CD4-positive, alpha-beta memory T cell (primary cell): ENCODE measurements at regions of chr9 and their contacts with region 1.

Region 1: DNA sequence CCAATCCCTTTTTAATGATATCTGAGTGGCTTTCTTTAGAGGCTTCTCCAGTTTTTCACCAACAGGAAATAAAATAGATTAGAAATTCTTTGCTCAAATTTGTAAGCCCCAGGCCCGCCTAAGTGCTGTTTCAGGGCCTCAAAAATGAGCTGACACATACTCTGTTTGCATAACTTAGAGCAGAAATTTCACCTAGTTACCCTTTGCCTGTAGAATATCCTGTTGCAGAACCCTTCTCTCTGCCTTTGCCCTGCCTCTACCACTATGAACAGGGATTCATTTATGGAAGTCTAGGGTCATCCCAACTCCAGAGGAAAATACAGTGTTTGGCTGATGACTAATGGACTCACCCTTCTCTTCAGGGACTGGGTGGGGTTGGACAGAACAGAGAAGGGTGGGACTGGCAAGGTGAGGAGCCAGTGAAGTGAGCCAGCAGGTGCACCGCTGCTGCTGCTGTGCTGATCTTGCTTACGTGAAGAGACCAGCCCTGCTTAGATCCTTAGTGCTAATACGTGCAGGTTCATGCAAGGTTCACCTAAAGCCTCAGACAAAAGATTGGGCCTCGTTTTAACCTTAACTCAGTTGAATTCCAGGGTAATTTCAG is 22.8 kb downstream of the OSTF1 start:
- DNase-seq: no peak
- H3K4me3 ChIP-seq: no peak overlapping the region
- H3K4me3 Mint-ChIP-seq: peak overlapping the region in 6 of 8 donors; percentile 6 to 66 (median 35)
- H3K27ac ChIP-seq: no peak overlapping the region
- H3K27ac Mint-ChIP-seq: peak overlapping the region; percentile 54 to 90 (median 75)
- H3K4me1 ChIP-seq: peaks cover 67% of the 10 kb centered on the region
- H3K4me1 Mint-ChIP-seq: peaks cover 46 to 73% (median 56%) of the 10 kb centered on the region in 4 donors
- H3K27me3 ChIP-seq: no peaks in the 10 kb centered on the region
- H3K27me3 Mint-ChIP-seq: no peaks in the 10 kb centered on the region

Region 2: DNA sequence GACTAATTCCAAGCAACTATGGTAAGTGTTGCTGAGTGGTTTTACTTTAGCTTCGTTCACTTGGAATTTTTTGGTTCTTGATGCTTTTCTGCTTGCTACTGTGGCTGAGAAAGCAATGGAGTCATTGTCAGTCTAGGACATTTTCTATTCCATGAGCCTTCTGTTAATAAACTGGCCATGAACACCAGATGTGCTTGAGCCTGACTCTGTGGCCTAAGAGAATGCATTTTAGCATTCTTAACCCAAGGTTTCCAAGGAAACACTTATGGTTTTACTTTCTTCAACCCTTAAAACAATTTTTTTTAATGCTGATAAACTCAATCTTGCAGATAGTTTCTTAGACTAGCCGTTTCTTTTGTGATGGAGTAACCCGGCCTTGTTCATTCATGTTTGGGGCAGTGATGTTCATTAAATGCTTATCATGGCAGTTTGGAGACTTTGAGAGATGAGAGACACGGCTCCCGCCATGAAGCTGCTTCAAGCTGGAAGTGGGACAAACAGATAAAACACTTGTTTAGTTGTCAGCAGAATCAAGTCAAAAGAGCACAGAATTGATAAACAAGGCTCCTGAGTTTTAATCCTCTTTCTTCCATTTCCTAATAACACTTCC is 19.6 kb after region 1 on chr9:
- CTCF ChIA-PET with region 1: interaction called, 3 read pairs
- POLR2A ChIA-PET with region 1: interaction called, 4 read pairs
- intact Hi-C with region 1: loop called (anchors 2 kb)
- DNase-seq: no peak
- H3K4me3 ChIP-seq: no peak overlapping the region
- H3K4me3 Mint-ChIP-seq: no peak overlapping the region
- H3K27ac ChIP-seq: no peak overlapping the region
- H3K27ac Mint-ChIP-seq: peak overlapping the region in 5 of 7 donors; percentile 22 to 49 (median 30)
- H3K4me1 ChIP-seq: peaks cover 25% of the 10 kb centered on the region
- H3K4me1 Mint-ChIP-seq: peaks cover 28 to 70% (median 47%) of the 10 kb centered on the region in 4 donors
- H3K27me3 ChIP-seq: no peaks in the 10 kb centered on the region
- H3K27me3 Mint-ChIP-seq: no peaks in the 10 kb centered on the region

Region 3: DNA sequence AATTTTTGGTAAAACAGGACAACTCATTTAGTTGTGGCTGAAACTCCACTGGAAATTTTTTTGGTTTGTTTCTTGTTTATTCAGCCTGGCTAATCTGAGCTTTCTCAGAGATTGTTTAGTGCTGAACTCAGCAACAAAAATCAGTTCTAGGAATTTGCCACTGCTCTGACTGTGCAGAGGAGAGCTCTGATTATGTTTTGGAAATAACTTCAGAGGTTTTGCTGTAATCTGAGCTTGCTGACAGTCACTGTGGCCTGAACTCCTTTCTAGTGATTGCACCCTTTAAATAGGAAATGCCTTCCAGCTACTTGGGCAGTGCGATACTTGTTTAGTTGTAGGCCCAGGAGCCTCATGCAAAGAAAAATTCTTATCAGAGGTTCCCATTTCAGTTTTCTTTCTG is 37.4 kb after region 1 on chr9:
- CTCF ChIA-PET with region 1: no interaction called
- POLR2A ChIA-PET with region 1: interaction called, 3 read pairs
- intact Hi-C with region 1: loop called (anchors 5 kb)
- DNase-seq: no peak
- H3K4me3 ChIP-seq: peak overlapping the region in 1 of 2 donors; percentile 0
- H3K4me3 Mint-ChIP-seq: peak overlapping the region in 7 of 8 donors; percentile 30 to 88 (median 80)
- H3K27ac ChIP-seq: peak overlapping the region; percentile 37
- H3K27ac Mint-ChIP-seq: peak overlapping the region; percentile 74 to 92 (median 84)
- H3K4me1 ChIP-seq: peaks cover 86% of the 10 kb centered on the region
- H3K4me1 Mint-ChIP-seq: peaks cover 62 to 92% (median 74%) of the 10 kb centered on the region in 4 donors
- H3K27me3 ChIP-seq: no peaks in the 10 kb centered on the region
- H3K27me3 Mint-ChIP-seq: no peaks in the 10 kb centered on the region